ENCODE measurements at regions of chr7 and their contacts with region 1.

Region 1: GRCh38 chr7:157273208-157274093 is 63.4 kb upstream of the DNAJB6 start:
- DNase-seq: peak; percentile 45 to 76
- ATAC-seq: peak; percentile 75 to 81 (median 76)
- H3K4me3 ChIP-seq: no peak overlapping the region
- H3K27ac ChIP-seq: no peak overlapping the region
- H3K4me1 ChIP-seq: peaks cover 7 to 47% (median 22%) of the 10 kb centered on the region in 9 donors
- H3K27me3 ChIP-seq: peaks cover 0 to 6% (median 0%) of the 10 kb centered on the region in 7 donors
- CTCF ChIP-seq: peak; percentile 94 to 100 (median 99)

Region 2: DNA sequence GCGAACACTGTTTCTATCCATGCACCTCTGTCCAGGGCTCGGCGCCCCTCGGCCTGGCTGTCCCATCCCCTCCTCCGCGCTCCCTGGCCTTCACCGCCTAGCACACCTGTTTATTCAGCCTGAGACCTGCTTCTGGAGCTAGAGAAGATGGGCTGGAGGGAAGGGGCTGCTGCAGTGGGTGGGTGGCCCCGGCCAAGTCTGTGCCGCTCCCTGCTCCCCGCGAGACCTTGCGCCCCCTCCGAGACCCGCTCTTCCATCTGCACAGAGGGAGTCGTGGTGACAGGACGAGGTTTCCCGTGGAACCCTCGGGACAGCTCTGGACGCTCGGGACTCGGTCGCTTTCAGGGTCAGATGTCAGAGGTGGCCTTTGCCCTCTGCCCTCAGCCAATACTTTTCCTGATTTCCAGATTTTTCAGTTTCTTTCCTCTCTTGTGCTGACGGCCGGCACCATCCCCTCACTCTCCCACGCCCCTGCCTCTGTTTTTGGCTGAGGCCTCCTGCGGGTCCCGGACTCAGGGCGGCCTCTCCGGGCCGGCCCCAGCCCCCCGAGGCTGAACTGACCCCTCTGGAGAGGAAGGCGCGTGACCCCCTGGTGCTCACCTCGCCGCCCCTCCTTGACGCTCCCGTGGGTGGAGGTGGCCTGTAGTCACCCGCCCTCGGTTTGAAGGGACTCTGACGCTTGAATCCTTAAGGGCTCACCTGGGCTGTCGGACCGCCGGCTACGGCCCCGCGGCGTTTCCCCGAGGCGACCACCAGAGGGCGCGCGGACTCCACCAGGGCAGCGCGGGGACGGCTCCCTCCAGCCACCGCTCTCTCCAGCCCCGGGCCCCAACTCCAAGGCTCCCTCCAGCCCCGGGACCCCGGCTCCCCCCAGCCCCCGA is 1476.8 kb before region 1 on chr7:
- intact Hi-C with region 1: loop called in 1 of 10 experiments (anchors 10 kb)
- DNase-seq: peak; percentile 29 to 68
- ATAC-seq: peak; percentile 66 to 83 (median 74)
- H3K4me3 ChIP-seq: no peak overlapping the region
- H3K27ac ChIP-seq: no peak overlapping the region
- H3K4me1 ChIP-seq: peaks cover 0 to 9% (median 3%) of the 10 kb centered on the region in 9 donors
- H3K27me3 ChIP-seq: peaks cover 14 to 65% (median 60%) of the 10 kb centered on the region in 7 donors
- CTCF ChIP-seq: peak; percentile 76 to 94 (median 88)

Region 3: DNA sequence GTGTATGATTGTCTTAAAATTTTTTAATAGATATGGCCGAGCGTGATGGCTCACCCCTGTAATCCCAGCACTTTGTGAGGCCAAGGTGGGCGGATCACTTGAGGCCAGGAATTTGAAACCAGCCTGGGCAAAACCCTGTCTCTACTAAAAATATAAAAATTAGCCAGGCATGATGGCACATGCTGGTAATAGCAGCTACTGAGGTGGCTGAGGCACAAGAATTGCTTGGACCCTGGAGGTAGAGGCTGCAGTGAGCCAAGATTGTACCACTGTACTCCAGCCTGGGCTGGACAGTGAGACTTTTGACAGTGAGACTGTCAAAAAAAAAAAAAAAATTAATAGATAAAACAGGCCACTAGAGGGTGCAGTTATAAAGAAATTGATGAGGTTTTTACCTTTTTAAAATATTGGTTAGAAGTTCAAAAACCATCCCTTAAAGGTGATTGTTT is 303.5 kb before region 1 on chr7:
- intact Hi-C with region 1: loop called in 3 of 10 experiments (anchors 10 kb)
- DNase-seq: no peak
- ATAC-seq: peak in 1 of 8 donors; percentile 40
- H3K4me3 ChIP-seq: no peak overlapping the region
- H3K27ac ChIP-seq: no peak overlapping the region
- H3K4me1 ChIP-seq: no peaks in the 10 kb centered on the region
- H3K27me3 ChIP-seq: no peaks in the 10 kb centered on the region
- CTCF ChIP-seq: peak in 8 of 9 donors; percentile 16 to 55 (median 43)

Region 4: GRCh38 chr7:157336383-157337315 is 63.2 kb after region 1 on chr7 and contains the start of gene DNAJB6:
- intact Hi-C with region 1: loop called in 4 of 10 experiments (anchors 5 to 10 kb)
- DNase-seq: peak; percentile 93 to 95
- ATAC-seq: peak; percentile 90 to 94 (median 92)
- H3K4me3 ChIP-seq: peak within 1 kb of the TSS; percentile 52 to 93 (median 81)
- H3K27ac ChIP-seq: peak within 1 kb of the TSS; percentile 83 to 99 (median 94)
- H3K4me1 ChIP-seq: peaks cover 6 to 48% (median 44%) of the 10 kb centered on the region in 9 donors
- H3K27me3 ChIP-seq: no peaks in the 10 kb centered on the region
- CTCF ChIP-seq: no peak
- total RNA-seq, gene DNAJB6: 144 to 200 (median 188) TPM

Region 5: GRCh38 chr7:157386979-157387800 is 113.7 kb after region 1 on chr7:
- intact Hi-C with region 1: loop called in 3 of 10 experiments (anchors 10 kb)
- DNase-seq: peak; percentile 79 to 89
- ATAC-seq: peak; percentile 76 to 93 (median 88)
- H3K4me3 ChIP-seq: no peak overlapping the region
- H3K27ac ChIP-seq: peak overlapping the region; percentile 28 to 76 (median 58)
- H3K4me1 ChIP-seq: peaks cover 0 to 59% (median 44%) of the 10 kb centered on the region in 9 donors
- H3K27me3 ChIP-seq: no peaks in the 10 kb centered on the region
- CTCF ChIP-seq: peak; percentile 88 to 97 (median 93)

Region 6: DNA sequence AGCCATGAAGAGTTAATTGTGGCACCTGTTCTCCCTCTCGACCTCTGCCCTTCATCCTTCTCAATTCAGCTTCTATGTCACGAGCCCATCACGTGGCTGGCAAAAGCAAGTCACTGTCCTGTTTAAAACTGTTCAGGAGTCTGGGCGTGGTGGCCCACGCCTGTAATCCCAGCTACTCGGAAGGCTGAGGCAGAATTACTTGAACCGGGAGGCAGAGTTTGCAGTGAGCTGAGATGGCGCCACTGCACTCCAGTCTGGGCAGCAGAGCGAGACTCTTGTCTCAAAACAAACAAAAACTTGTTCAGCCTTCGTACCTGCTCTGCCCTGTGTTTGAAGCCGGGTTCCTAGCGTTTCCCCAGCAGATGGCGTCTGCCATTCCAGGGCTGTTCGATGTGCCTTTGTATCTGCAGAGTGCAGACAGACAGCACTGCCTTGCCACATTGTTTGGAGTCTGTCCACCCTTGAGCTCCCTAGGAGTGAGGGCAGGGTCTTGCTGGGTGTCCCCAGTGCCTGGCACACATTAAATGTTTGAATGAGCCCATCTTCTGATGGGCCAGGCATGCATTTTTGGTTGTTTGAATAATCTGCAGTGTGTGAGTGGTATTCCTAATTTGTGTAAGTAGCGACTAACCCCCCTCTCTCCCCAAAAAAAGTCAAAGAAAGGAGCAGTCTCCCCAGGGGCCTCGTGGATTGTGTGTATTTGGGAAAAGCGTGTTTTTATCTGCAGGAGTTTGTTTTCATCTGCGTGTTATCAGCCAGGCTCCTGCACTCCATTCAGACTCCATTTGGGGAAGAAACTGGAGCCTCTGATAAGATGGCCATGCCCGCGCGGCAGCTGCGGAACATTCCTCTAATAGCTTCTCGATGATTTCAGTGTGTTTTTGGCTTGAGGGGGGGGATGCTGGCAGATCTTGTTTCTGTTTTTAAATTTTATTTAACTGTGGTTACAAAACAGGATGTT is 124.6 kb after region 1 on chr7:
- intact Hi-C with region 1: loop called in 2 of 10 experiments (anchors 10 kb)
- DNase-seq: peak in 1 of 2 donors; percentile 62
- ATAC-seq: peak; percentile 54 to 87 (median 73)
- H3K4me3 ChIP-seq: peak overlapping the region in 2 of 10 donors; percentile 1 to 2
- H3K27ac ChIP-seq: peak overlapping the region; percentile 53 to 86 (median 77)
- H3K4me1 ChIP-seq: peaks cover 6 to 53% (median 35%) of the 10 kb centered on the region in 9 donors
- H3K27me3 ChIP-seq: no peaks in the 10 kb centered on the region
- CTCF ChIP-seq: peak in 8 of 9 donors; percentile 12 to 60 (median 46)

Measured in heart right ventricle (tissue), 16 donors.